GM13977 (cell line): ENCODE measurements at regions of chr11 and their contacts with region 1.

Region 1: GRCh38 chr11:31096191-31096805 is 273.2 kb downstream of the DCDC1 start:
- DNase-seq: no peak
- CTCF ChIP-seq: no peak

Region 2: GRCh38 chr11:31218847-31219246 is 122.5 kb after region 1 on chr11:
- in situ Hi-C with region 1: loop called (anchors 25 kb)
- DNase-seq: no peak
- CTCF ChIP-seq: no peak